IMR-90 (cell line): ENCODE measurements at regions of chrX and their contacts with region 1.

Region 1: GRCh38 chrX:80876877-80877276 is 67.2 kb upstream of the BRWD3 start:
- DNase-seq: peak; percentile 44
- ATAC-seq: peak; percentile 48; the same call in 1 of the 2 replicates
- H3K4me3 ChIP-seq: no peak overlapping the region
- H3K27ac ChIP-seq: no peak overlapping the region
- H3K4me1 ChIP-seq: no peaks in the 10 kb centered on the region
- H3K27me3 ChIP-seq: no peaks in the 10 kb centered on the region; the same call in 1 of the 2 replicates
- CTCF ChIP-seq: peak; percentile 59
- POLR2A ChIP-seq: no peak
- RAD21 ChIP-seq: peak; percentile 62

Region 2: DNA sequence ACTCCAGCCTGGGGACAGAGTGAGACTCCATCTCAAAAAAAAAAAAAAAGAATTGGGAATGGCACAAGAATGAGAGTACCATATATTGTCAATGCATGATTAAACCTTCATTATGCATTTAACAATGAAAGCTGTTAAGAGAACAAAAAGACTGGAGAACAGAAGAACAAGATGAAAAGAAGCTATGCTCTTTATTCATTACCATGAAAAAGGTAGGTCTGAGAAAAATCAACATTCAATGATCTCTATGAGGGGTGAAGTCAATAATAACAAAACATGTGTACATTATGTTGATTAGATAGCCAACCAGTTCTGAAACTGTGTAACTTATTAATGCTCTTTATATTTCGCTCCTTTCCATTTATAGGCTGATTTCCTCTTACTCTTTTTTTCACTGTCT is 168.1 kb before region 1 on chrX:
- CTCF ChIA-PET with region 1: no interaction called
- POLR2A ChIA-PET with region 1: no interaction called
- dilution Hi-C with region 1: no loop called
- in situ Hi-C with region 1: no loop called
- intact Hi-C with region 1: no loop called
- DNase-seq: no peak
- ATAC-seq: no peak
- H3K4me3 ChIP-seq: no peak overlapping the region
- H3K27ac ChIP-seq: no peak overlapping the region
- H3K4me1 ChIP-seq: no peaks in the 10 kb centered on the region
- H3K27me3 ChIP-seq: no peaks in the 10 kb centered on the region
- CTCF ChIP-seq: no peak
- POLR2A ChIP-seq: no peak
- RAD21 ChIP-seq: no peak

Region 3: DNA sequence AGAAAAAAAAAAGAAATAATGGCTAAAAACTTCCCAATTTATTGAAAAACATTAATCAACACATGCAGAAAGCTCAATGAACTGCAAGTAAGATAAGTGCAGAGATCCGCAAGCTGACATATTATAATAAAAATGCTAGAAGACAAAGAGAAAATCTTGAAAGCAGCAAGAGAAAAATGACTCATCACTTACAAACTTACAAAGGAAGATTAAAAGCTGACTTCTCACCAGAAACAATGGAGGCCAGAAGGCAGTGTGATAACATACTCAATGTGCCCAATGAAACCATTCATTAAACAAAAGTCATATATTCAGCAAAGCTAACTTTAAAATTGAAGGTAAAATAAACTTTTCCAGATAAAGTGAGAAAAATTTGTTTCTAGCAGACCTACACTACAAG is 59.9 kb before region 1 on chrX:
- CTCF ChIA-PET with region 1: no interaction called
- POLR2A ChIA-PET with region 1: no interaction called
- dilution Hi-C with region 1: no loop called
- in situ Hi-C with region 1: no loop called
- intact Hi-C with region 1: no loop called
- DNase-seq: no peak
- ATAC-seq: no peak
- H3K4me3 ChIP-seq: no peak overlapping the region
- H3K27ac ChIP-seq: no peak overlapping the region
- H3K4me1 ChIP-seq: no peaks in the 10 kb centered on the region
- H3K27me3 ChIP-seq: no peaks in the 10 kb centered on the region
- CTCF ChIP-seq: no peak
- POLR2A ChIP-seq: no peak
- RAD21 ChIP-seq: no peak

Region 4: GRCh38 chrX:81121513-81122382 is 244.9 kb after region 1 on chrX:
- CTCF ChIA-PET with region 1: no interaction called
- POLR2A ChIA-PET with region 1: no interaction called
- dilution Hi-C with region 1: no loop called
- in situ Hi-C with region 1: no loop called
- intact Hi-C with region 1: loop called (anchors 1 kb)
- DNase-seq: peak; percentile 90
- ATAC-seq: peak; percentile 96
- H3K4me3 ChIP-seq: peak overlapping the region; percentile 58
- H3K27ac ChIP-seq: no peak overlapping the region
- H3K4me1 ChIP-seq: no peaks in the 10 kb centered on the region
- H3K27me3 ChIP-seq: no peaks in the 10 kb centered on the region
- CTCF ChIP-seq: no peak
- POLR2A ChIP-seq: no peak
- RAD21 ChIP-seq: no peak

Region 5: GRCh38 chrX:81280148-81280547 is 403.3 kb after region 1 on chrX:
- CTCF ChIA-PET with region 1: no interaction called
- POLR2A ChIA-PET with region 1: no interaction called
- dilution Hi-C with region 1: no loop called
- in situ Hi-C with region 1: no loop called
- intact Hi-C with region 1: no loop called
- DNase-seq: no peak
- ATAC-seq: no peak
- H3K4me3 ChIP-seq: no peak overlapping the region
- H3K27ac ChIP-seq: no peak overlapping the region
- H3K4me1 ChIP-seq: no peaks in the 10 kb centered on the region
- H3K27me3 ChIP-seq: no peaks in the 10 kb centered on the region
- CTCF ChIP-seq: 0 out of 2 replicates have a peak, but pooled peaks have one; percentile 8
- POLR2A ChIP-seq: no peak
- RAD21 ChIP-seq: no peak

Region 6: DNA sequence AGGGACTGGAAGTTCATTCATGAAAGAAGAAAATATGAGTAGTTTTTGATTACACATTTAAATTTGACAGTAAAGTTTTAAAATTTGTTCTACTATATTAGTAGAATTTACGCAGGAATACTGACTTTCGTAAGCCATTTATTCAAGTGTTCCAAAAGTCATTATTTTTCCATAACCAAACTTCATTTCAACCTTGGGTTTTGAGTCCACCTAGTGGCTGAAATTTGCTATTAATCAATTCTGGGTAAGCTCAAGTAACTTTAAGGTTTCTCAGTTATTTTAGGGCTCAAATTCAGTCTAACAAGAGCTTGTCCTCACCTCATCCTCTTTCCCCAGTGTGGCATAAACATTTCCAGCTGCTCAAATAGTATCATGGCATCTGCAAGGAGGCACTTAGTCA is 500.5 kb after region 1 on chrX:
- CTCF ChIA-PET with region 1: no interaction called
- POLR2A ChIA-PET with region 1: no interaction called
- dilution Hi-C with region 1: no loop called
- in situ Hi-C with region 1: loop called (anchors 25 kb)
- intact Hi-C with region 1: loop called (anchors 10 kb)
- DNase-seq: peak; percentile 27
- ATAC-seq: no peak
- H3K4me3 ChIP-seq: no peak overlapping the region
- H3K27ac ChIP-seq: no peak overlapping the region
- H3K4me1 ChIP-seq: no peaks in the 10 kb centered on the region
- H3K27me3 ChIP-seq: no peaks in the 10 kb centered on the region
- CTCF ChIP-seq: peak; percentile 62
- POLR2A ChIP-seq: no peak
- RAD21 ChIP-seq: peak; percentile 61

Region 7: GRCh38 chrX:81414630-81415029 is 537.8 kb after region 1 on chrX:
- CTCF ChIA-PET with region 1: interaction called, 3 read pairs
- POLR2A ChIA-PET with region 1: no interaction called
- dilution Hi-C with region 1: no loop called
- in situ Hi-C with region 1: no loop called
- intact Hi-C with region 1: loop called (anchors 2 kb)
- DNase-seq: no peak
- ATAC-seq: no peak
- H3K4me3 ChIP-seq: no peak overlapping the region
- H3K27ac ChIP-seq: no peak overlapping the region
- H3K4me1 ChIP-seq: no peaks in the 10 kb centered on the region
- H3K27me3 ChIP-seq: no peaks in the 10 kb centered on the region
- CTCF ChIP-seq: peak; percentile 31; the same call in 1 of the 2 replicates
- POLR2A ChIP-seq: no peak
- RAD21 ChIP-seq: peak; percentile 32; the same call in 1 of the 2 replicates